ENCODE measurements at regions of chr1 and their contacts with region 1.

Region 1: DNA sequence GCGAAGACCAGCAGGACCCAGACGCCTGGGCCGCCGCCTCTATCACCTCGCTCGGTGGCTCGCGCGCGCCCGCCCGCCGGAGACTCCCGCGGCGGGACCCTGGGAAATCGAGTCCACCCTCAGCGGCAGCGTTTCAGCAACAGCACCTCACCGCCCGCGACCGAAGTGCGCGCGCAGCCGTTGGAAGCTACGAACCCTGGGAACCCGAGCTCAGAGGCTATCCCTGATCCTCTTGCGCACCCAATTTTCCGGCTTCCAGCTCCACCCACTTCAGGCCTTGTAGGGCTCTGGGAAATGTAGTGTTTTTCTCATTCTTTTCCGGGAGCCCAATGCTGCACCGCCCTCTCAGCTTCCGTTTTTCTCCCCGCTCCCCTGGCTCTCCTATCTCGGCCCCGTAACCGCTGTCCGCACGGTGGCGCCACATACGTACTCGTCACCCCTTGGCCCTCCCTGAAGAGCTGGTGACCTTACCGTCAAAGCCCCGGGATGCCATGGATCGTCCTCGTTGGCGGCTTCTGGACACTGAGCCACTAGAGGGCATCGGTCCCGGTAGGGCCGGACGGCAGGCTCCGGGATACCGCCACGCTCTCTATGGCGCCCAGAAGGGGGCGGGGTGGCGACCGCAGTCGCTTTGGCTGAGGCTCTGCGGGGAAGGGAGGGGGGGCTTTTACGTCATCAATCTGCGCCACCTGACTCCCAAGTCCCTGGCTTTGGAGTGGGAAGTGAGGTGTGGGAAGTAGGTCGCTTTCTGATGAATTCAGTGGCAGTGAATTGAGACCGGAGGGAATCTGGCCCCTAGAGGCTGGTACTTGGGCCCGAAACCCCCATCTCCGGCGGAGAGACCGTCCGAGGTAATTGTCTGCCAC is at the starts of genes ODR4 and TPR:
- DNase-seq: peak; percentile 99
- H3K4me3 Mint-ChIP-seq: peak within 1 kb of the TSS; percentile 100
- H3K27ac Mint-ChIP-seq: peak within 1 kb of the TSS; percentile 99
- H3K4me1 Mint-ChIP-seq: peaks cover 37% of the 10 kb centered on the region
- H3K27me3 Mint-ChIP-seq: no peaks in the 10 kb centered on the region
- total RNA-seq, gene ODR4: 15.6 and 20.0 TPM in 2 replicates
- total RNA-seq, gene TPR: 174 and 185 TPM in 2 replicates

Region 2: GRCh38 chr1:186272486-186272885 is 102.8 kb before region 1 on chr1:
- intact Hi-C with region 1: loop called (anchors 1 kb)
- DNase-seq: no peak
- H3K4me3 Mint-ChIP-seq: no peak overlapping the region
- H3K27ac Mint-ChIP-seq: no peak overlapping the region
- H3K4me1 Mint-ChIP-seq: peaks cover 9% of the 10 kb centered on the region
- H3K27me3 Mint-ChIP-seq: no peaks in the 10 kb centered on the region

Region 3: DNA sequence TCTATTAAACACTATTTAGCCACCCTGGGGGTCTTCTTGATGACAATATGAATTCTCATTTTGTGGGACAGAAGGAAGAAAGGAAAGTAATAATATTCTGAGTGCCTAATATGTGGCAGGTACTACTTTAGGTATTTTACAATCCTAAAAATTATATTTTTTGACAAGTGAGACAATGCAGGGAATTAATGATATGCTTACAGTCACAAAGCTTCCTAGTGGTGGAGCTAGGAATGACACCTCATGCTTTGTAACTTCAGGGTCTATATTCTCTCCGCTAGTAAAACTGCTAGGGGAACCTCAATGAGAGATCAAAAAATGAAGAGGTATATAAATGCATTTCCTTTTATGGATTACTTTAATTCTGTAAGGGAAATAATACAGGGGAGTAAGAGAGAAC is 44.6 kb before region 1 on chr1:
- intact Hi-C with region 1: loop called (anchors 5 kb)
- DNase-seq: no peak
- H3K4me3 Mint-ChIP-seq: no peak overlapping the region
- H3K27ac Mint-ChIP-seq: no peak overlapping the region
- H3K4me1 Mint-ChIP-seq: peaks cover 9% of the 10 kb centered on the region
- H3K27me3 Mint-ChIP-seq: no peaks in the 10 kb centered on the region

Region 4: GRCh38 chr1:186618401-186619170 is 243.3 kb after region 1 on chr1:
- intact Hi-C with region 1: loop called (anchors 1 kb)
- DNase-seq: peak; percentile 88
- H3K4me3 Mint-ChIP-seq: peak overlapping the region; percentile 77
- H3K27ac Mint-ChIP-seq: no peak overlapping the region
- H3K4me1 Mint-ChIP-seq: peaks cover 37% of the 10 kb centered on the region
- H3K27me3 Mint-ChIP-seq: peaks cover 18% of the 10 kb centered on the region